A549 (cell line): ENCODE measurements at regions of chr12 and their contacts with region 1.

Region 1: GRCh38 chr12:8644345-8645248 is 18.0 kb downstream of the MFAP5 start:
- DNase-seq: no peak
- ATAC-seq: no peak
- H3K4me3 ChIP-seq: no peak overlapping the region
- H3K27ac ChIP-seq: no peak overlapping the region
- H3K4me1 ChIP-seq: no peaks in the 10 kb centered on the region
- CTCF ChIP-seq: no peak
- EP300 ChIP-seq: no peak
- POLR2A ChIP-seq: no peak
- RAD21 ChIP-seq: no peak

Region 2: DNA sequence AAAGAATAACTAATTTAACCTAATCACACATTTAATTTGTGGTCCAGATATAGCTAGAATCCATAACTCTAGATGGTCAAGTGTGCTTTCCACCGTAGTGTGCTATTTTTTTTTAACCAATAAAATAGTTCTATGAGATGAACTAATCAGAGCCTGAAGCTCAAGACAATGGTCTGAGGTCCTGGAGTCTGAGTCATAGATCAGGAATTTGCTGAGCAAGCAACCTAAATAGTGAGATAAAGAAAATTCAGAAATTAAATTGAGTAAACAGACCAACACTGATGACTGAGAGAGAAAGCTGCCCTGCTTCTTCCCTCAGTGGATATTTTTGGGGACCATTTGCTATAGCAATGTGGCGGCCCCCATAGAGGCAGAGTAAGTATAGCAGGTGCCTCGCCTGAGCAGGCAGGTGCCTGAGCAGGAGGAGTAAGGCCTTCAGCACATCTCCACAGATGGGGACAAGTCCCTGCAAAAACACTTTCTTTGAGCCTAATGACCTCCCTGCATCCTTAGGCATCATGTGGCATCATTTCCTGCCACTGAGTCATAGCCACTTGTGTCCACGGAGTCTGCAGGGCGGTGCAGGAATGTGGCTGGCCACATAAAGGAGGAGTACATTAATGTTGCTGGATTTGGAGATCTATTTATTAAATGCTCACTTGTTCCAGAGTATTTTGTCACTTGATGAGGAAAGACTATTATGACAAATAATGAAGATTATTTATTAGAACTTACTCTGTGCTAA is 90.0 kb before region 1 on chr12:
- CTCF ChIA-PET with region 1: no interaction called
- POLR2A ChIA-PET with region 1: no interaction called
- DNase-seq: peak in 1 of 2 experiments; percentile 12
- ATAC-seq: no peak; a peak in 1 of 6 replicates
- H3K4me3 ChIP-seq: no peak overlapping the region
- H3K27ac ChIP-seq: no peak overlapping the region
- H3K4me1 ChIP-seq: no peaks in the 10 kb centered on the region
- CTCF ChIP-seq: no peak
- EP300 ChIP-seq: no peak
- POLR2A ChIP-seq: no peak
- RAD21 ChIP-seq: no peak

Region 3: GRCh38 chr12:8662593-8662992 is 18.0 kb after region 1 on chr12 and contains the start of gene MFAP5:
- CTCF ChIA-PET with region 1: interaction called, 38 read pairs
- POLR2A ChIA-PET with region 1: no interaction called
- DNase-seq: no peak
- ATAC-seq: 0 out of 6 replicates have a peak, but pooled peaks of 1 of the 2 experiments have one; percentile 36
- H3K4me3 ChIP-seq: no peak within 1 kb of the TSS
- H3K27ac ChIP-seq: no peak within 1 kb of the TSS
- H3K4me1 ChIP-seq: no peaks in the 10 kb centered on the region; the same call in 2 of the 3 replicates
- CTCF ChIP-seq: no peak
- EP300 ChIP-seq: no peak
- POLR2A ChIP-seq: no peak
- RAD21 ChIP-seq: no peak
- polyA plus RNA-seq, gene MFAP5: 0.40 and 0.48 TPM in 2 replicates

Region 4: GRCh38 chr12:8687846-8688601 is 43.4 kb after region 1 on chr12:
- CTCF ChIA-PET with region 1: no interaction called
- POLR2A ChIA-PET with region 1: no interaction called
- DNase-seq: peak; percentile 36 to 76
- ATAC-seq: peak; percentile 95 to 97
- H3K4me3 ChIP-seq: 0 out of 3 replicates have a peak overlapping the region, but pooled peaks have one; percentile 3
- H3K27ac ChIP-seq: peak overlapping the region; percentile 5 to 58; a peak in 2 of 6 replicates
- H3K4me1 ChIP-seq: peaks cover 12% of the 10 kb centered on the region
- CTCF ChIP-seq: no peak
- EP300 ChIP-seq: no peak
- POLR2A ChIP-seq: no peak
- RAD21 ChIP-seq: no peak

Region 5: GRCh38 chr12:8734873-8735381 is 90.3 kb after region 1 on chr12:
- CTCF ChIA-PET with region 1: no interaction called
- POLR2A ChIA-PET with region 1: no interaction called
- DNase-seq: no peak
- ATAC-seq: no peak
- H3K4me3 ChIP-seq: no peak overlapping the region
- H3K27ac ChIP-seq: no peak overlapping the region
- H3K4me1 ChIP-seq: peaks cover 9% of the 10 kb centered on the region; the same call in 1 of the 3 replicates
- CTCF ChIP-seq: no peak
- EP300 ChIP-seq: no peak
- POLR2A ChIP-seq: no peak
- RAD21 ChIP-seq: no peak

Region 6: DNA sequence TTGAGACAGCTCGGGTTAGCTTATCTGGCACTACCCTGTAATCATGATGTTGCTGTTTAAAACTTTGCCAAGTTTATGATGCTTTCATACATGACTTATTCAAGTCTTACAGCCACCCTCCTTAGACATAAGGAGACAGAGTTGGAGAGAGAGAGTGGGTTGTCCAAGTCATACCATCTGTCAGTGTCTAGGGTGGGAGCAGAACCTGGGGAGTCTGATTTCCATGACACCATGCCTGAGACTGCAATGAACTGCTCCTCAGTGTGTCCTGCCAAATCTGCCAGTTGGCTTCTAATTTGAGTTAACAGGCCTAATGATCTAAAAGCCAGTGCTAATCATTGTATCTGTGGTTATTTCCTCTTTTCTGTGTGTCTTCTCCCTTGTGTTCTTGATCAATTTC is 226.0 kb after region 1 on chr12:
- CTCF ChIA-PET with region 1: no interaction called
- POLR2A ChIA-PET with region 1: no interaction called
- DNase-seq: no peak
- ATAC-seq: no peak
- H3K4me3 ChIP-seq: no peak overlapping the region
- H3K27ac ChIP-seq: no peak overlapping the region
- H3K4me1 ChIP-seq: no peaks in the 10 kb centered on the region
- CTCF ChIP-seq: no peak
- EP300 ChIP-seq: no peak
- POLR2A ChIP-seq: no peak
- RAD21 ChIP-seq: no peak